Tibial artery (tissue), 4 donors: ENCODE measurements at regions of chr1 and their contacts with region 1.

Region 1: DNA sequence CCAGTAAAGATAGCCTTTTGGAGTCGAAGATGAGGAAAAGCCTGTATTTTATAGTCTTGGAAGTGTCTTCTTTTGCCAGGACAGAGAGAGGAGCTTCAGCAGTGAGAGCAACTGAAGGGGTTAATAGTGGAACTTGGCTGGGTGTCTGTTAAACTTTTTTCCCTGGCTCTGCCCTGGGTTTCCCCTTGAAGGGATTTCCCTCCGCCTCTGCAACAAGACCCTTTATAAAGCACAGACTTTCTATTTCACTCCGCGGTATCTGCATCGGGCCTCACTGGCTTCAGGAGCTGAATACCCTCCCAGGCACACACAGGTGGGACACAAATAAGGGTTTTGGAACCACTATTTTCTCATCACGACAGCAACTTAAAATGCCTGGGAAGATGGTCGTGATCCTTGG is at the start of gene VCAM1:
- DNase-seq: no peak
- H3K4me3 ChIP-seq: peak within 1 kb of the TSS; percentile 26 to 30
- H3K27ac ChIP-seq: peak within 1 kb of the TSS; percentile 11 to 54
- H3K4me1 ChIP-seq: peaks cover 0 to 17% (median 0%) of the 10 kb centered on the region in 4 donors
- H3K27me3 ChIP-seq: no peaks in the 10 kb centered on the region
- CTCF ChIP-seq: no peak

Region 2: GRCh38 chr1:100683448-100684349 is 35.8 kb before region 1 on chr1:
- intact Hi-C with region 1: loop called (anchors 2 kb)
- DNase-seq: no peak
- H3K4me3 ChIP-seq: no peak overlapping the region
- H3K27ac ChIP-seq: no peak overlapping the region
- H3K4me1 ChIP-seq: no peaks in the 10 kb centered on the region
- H3K27me3 ChIP-seq: no peaks in the 10 kb centered on the region
- CTCF ChIP-seq: no peak